PC-3 (cell line): ENCODE measurements at regions of chr2 and their contacts with region 1.

Region 1: DNA sequence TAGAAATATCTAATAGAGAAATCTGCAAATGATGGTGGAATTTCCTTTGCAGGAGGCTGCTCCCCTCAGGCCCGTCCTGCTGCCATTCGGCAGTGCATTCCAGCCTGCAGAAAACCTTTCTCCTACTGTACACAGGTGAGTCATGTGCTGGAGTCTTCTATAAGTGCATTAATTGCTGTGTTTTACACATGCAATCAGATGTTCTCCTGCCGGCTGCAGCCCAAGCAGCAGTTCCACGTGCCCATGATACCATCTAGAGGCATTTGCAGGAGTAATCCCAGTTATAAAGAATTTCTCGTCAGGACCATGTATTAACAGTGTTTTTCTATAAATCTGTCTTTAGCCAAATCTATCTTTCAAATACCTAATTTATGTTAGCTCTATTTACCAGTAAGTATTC is 304.7 kb upstream of the HNMT start:
- DNase-seq: peak; percentile 76
- ATAC-seq: peak; percentile 92
- H3K4me3 ChIP-seq: no peak overlapping the region
- H3K27ac ChIP-seq: no peak overlapping the region
- H3K4me1 ChIP-seq: no peaks in the 10 kb centered on the region
- H3K27me3 ChIP-seq: peaks cover 44% of the 10 kb centered on the region
- CTCF ChIP-seq: peak; percentile 67

Region 2: GRCh38 chr2:136423516-136423996 is 1236.1 kb before region 1 on chr2:
- CTCF ChIA-PET with region 1: no interaction called
- POLR2A ChIA-PET with region 1: no interaction called
- intact Hi-C with region 1: loop called (anchors 10 kb)
- DNase-seq: peak; percentile 72
- ATAC-seq: peak; percentile 97
- H3K4me3 ChIP-seq: peak overlapping the region; percentile 61
- H3K27ac ChIP-seq: no peak overlapping the region
- H3K4me1 ChIP-seq: peaks cover 9% of the 10 kb centered on the region; the same call in 1 of the 2 replicates
- H3K27me3 ChIP-seq: peaks cover 75% of the 10 kb centered on the region
- CTCF ChIP-seq: peak; percentile 88

Region 3: DNA sequence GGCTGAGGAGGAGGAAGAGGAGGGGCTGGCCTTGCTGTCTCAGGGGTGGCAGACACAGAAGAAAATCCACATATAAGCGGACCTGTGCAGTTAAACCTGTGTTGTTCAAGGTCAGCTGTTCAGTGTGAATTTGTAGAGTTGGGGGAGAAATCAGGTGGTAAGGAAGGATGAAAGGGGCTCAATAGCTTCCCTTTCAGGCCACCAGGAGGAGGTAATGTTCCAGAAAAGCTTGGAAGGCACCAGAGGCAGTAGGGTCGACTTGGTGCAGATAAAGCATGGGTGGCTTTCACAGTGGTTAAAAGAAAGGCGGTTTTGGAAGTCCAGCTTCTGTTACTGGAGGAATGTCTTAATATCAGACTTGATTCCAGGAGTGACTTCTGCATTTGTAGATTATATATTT is 726.9 kb before region 1 on chr2:
- CTCF ChIA-PET with region 1: no interaction called
- POLR2A ChIA-PET with region 1: no interaction called
- intact Hi-C with region 1: loop called (anchors 5 kb)
- DNase-seq: peak; percentile 61
- ATAC-seq: peak; percentile 43; the same call in 1 of the 2 replicates
- H3K4me3 ChIP-seq: no peak overlapping the region
- H3K27ac ChIP-seq: no peak overlapping the region
- H3K4me1 ChIP-seq: no peaks in the 10 kb centered on the region
- H3K27me3 ChIP-seq: peaks cover 10% of the 10 kb centered on the region; the same call in 1 of the 2 replicates
- CTCF ChIP-seq: peak; percentile 80

Region 4: DNA sequence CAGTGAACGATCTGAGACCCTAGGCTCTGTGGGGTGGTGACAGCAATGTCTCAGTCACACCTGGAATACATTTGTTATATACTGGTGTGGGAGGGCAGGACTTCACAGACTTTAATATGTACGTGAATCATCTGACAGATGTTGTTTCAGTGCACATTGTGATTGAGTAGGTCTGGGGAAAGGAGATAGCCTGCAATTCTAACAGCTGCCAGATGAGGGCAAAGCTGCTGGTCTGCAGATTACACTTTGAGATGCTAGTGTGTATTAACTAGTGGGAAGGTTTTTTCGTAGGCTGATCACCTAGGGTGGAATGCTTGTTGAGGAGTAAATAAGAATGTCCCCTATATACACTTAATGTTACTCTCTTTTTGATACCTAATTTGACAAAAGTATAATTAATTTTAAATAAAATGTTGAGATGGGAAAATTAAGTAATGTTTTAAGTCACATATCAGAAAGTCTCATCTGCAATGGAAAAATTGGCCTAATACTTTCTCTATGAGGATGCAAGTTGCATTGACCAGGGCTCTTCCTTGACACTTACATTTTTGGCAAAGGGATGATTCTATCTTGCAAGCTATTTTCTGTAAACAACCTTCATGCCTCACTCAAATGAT is 192.3 kb before region 1 on chr2:
- CTCF ChIA-PET with region 1: no interaction called
- POLR2A ChIA-PET with region 1: no interaction called
- intact Hi-C with region 1: loop called (anchors 5 kb)
- DNase-seq: peak; percentile 71
- ATAC-seq: peak; percentile 73
- H3K4me3 ChIP-seq: no peak overlapping the region
- H3K27ac ChIP-seq: no peak overlapping the region
- H3K4me1 ChIP-seq: no peaks in the 10 kb centered on the region
- H3K27me3 ChIP-seq: peaks cover 24% of the 10 kb centered on the region
- CTCF ChIP-seq: peak; percentile 76

Region 5: GRCh38 chr2:138447889-138448570 is 788.4 kb after region 1 on chr2:
- CTCF ChIA-PET with region 1: no interaction called
- POLR2A ChIA-PET with region 1: no interaction called
- intact Hi-C with region 1: no loop called
- DNase-seq: no peak
- ATAC-seq: peak; percentile 22; the same call in 1 of the 2 replicates
- H3K4me3 ChIP-seq: no peak overlapping the region
- H3K27ac ChIP-seq: no peak overlapping the region
- H3K4me1 ChIP-seq: no peaks in the 10 kb centered on the region
- H3K27me3 ChIP-seq: no peaks in the 10 kb centered on the region
- CTCF ChIP-seq: no peak

Region 6: GRCh38 chr2:138516030-138516704 is 856.6 kb after region 1 on chr2:
- CTCF ChIA-PET with region 1: no interaction called
- POLR2A ChIA-PET with region 1: no interaction called
- intact Hi-C with region 1: no loop called
- DNase-seq: peak; percentile 19
- ATAC-seq: no peak
- H3K4me3 ChIP-seq: no peak overlapping the region
- H3K27ac ChIP-seq: no peak overlapping the region
- H3K4me1 ChIP-seq: peaks cover 18% of the 10 kb centered on the region
- H3K27me3 ChIP-seq: no peaks in the 10 kb centered on the region
- CTCF ChIP-seq: no peak